ENCODE measurements at regions of chr19 and their contacts with region 1.

Region 1: DNA sequence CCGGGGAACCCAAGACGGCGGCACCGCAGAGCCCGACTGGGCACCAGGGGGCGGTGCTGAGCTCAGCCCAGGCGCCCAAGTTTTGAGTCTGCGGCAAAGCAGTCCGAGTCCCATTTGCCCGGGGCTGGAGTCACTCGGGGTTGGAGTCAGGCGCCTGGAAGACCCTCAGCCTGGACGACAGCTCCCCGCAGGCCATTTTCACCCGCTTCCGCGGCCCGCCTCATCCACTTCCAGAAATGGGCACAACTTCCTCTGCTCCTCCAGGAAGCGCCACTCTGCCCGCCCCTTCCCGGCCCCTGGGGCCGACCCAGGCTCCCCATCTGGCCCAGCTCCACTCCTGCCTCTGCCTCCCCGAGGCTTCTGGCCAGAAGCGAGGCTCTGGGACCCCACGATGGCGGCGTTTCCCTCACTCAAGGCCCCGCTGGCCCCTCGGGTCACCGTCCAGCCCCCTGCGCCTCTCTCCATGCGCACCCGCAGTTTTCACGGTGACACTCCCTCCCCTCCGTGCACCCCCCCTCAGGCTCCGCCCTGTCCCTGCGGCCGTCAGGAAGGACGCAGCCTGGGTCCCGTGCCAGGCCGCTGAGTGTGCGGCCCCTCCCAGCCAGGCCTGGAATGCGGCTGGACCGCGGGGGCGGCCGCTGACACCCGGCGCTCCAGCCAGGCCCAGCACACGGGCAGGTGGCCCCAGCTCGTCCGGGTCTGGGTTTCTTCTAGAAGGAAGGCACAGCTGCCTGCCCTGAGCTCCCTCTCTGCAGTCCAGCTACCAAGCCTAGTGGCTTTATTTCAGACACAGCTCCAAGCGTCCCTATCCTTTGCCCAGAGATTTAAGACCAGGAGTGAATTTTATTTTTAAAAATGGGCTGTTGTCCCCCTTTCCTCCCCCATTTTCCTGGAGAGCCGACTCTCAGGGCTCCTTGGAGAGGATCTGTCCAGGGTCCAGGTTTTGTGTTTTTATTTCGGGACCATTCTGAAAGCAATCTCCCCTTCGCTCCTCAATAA is 4.7 kb downstream of the SERTAD1 start:
- DNase-seq: peak; percentile 86
- H3K4me3 Mint-ChIP-seq: peak overlapping the region; percentile 81
- H3K27ac Mint-ChIP-seq: peak overlapping the region; percentile 95
- H3K4me1 Mint-ChIP-seq: peaks cover 59% of the 10 kb centered on the region
- H3K27me3 Mint-ChIP-seq: peaks cover 11% of the 10 kb centered on the region

Region 2: GRCh38 chr19:40407714-40408597 is 13.1 kb before region 1 on chr19:
- CTCF ChIA-PET with region 1: interaction called, 15 read pairs
- DNase-seq: peak; percentile 36
- H3K4me3 Mint-ChIP-seq: no peak overlapping the region
- H3K27ac Mint-ChIP-seq: peak overlapping the region; percentile 55
- H3K4me1 Mint-ChIP-seq: peaks cover 23% of the 10 kb centered on the region
- H3K27me3 Mint-ChIP-seq: peaks cover 14% of the 10 kb centered on the region

Region 3: DNA sequence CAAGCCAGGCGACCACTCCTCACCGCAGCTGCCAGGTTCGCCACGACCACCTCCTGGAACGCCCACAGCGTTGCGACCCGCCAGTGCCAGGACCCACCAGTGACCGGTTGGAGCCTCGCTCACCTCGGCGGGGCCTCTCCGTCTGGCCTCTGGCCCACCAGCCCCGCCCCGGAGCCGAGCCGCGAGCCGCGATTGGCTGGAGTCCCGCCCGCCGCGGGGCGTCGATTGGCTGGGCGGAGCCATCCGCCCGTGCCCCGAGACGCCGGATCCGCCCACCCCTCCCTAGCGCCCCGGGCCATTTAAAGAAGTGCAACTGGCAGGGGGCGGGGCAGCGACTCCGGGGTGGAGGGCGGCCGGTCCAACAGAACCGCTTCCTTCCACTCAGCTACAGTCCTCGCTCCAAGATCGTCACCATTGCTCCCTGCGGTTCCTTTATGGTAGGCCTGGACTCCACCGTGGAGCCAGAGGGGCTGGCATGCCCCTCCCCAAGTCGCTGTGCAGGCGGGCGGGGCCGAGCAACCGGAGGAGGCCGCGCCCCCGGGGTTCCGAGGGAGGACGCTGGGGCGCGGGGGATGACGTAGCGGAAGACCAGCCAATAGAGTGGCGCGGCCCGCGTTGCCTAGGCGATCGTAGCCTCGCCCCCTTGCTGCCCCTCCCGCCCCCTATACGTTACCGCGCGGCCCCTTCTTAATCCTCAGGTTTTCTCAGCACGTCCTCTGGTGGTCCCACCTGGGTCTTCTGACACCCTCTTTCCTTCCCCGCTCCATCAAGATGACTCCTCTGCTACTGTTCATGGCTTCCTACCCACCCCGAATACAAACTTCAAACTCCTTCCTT is 23.3 kb after region 1 on chr19 and contains the start of gene SERTAD3:
- CTCF ChIA-PET with region 1: interaction called, 10 read pairs
- DNase-seq: peak; percentile 97
- H3K4me3 Mint-ChIP-seq: peak within 1 kb of the TSS; percentile 97
- H3K27ac Mint-ChIP-seq: peak within 1 kb of the TSS; percentile 97
- H3K4me1 Mint-ChIP-seq: peaks cover 19% of the 10 kb centered on the region
- H3K27me3 Mint-ChIP-seq: peaks cover 4% of the 10 kb centered on the region

Region 4: GRCh38 chr19:40640744-40641143 is 219.7 kb after region 1 on chr19:
- CTCF ChIA-PET with region 1: no interaction called
- DNase-seq: no peak
- H3K4me3 Mint-ChIP-seq: no peak overlapping the region
- H3K27ac Mint-ChIP-seq: no peak overlapping the region
- H3K4me1 Mint-ChIP-seq: peaks cover 12% of the 10 kb centered on the region
- H3K27me3 Mint-ChIP-seq: peaks cover 23% of the 10 kb centered on the region